GM12878 (cell line): ENCODE measurements at regions of chr5 and their contacts with region 1.

Region 1: DNA sequence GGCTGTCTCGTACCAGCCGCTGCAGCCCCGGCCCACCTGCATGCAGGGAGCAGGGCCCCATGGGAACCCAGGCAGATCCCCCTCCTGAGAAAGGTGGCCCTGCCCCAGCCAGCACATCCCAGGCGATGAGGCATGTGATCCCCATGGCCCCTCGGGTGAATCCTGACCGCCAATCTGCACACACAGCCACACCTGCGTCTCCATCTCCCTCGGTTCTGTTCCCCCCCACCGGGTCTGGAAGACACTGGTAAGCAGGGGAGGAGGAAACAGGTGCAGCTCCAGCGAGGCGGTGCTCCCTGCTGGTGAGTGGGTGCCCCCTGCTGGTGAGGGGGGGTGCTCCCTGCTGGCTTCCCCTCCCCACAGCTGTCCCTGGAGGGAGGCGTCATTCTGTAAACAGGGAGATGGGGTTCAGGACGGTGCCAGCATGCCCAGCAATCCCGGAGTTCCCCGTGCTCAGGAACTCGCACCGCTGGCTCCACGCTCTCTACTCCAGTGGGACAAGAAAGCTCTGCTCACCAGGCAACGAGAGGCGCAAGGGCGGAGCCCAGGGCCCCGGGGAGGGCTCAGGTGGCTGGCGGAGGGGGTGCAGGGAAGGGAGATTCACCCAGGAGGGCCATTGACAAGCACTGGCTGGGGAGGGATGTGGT is 28.4 kb upstream of the SLC12A7 start:
- DNase-seq: no peak
- ATAC-seq: peak; percentile 93
- H3K4me3 ChIP-seq: no peak overlapping the region
- H3K27ac ChIP-seq: no peak overlapping the region
- H3K4me1 ChIP-seq: peaks cover 11% of the 10 kb centered on the region
- H3K27me3 ChIP-seq: no peaks in the 10 kb centered on the region
- CTCF ChIP-seq: peak; percentile 79 to 92 (median 90)
- EP300 ChIP-seq: no peak
- POLR2A ChIP-seq: no peak
- RAD21 ChIP-seq: peak; percentile 78

Region 2: GRCh38 chr5:989961-990530 is 150.2 kb before region 1 on chr5:
- CTCF ChIA-PET with region 1: interaction called, 16 read pairs
- POLR2A ChIA-PET with region 1: no interaction called
- RAD21 ChIA-PET with region 1: no interaction called
- SMC1A ChIA-PET with region 1: no interaction called
- in situ Hi-C with region 1: no loop called
- intact Hi-C with region 1: no loop called
- DNase-seq: no peak
- ATAC-seq: peak; percentile 42
- H3K4me3 ChIP-seq: no peak overlapping the region
- H3K27ac ChIP-seq: no peak overlapping the region
- H3K4me1 ChIP-seq: no peaks in the 10 kb centered on the region
- H3K27me3 ChIP-seq: peaks cover 4% of the 10 kb centered on the region in 2 experiments; a peak in 3 of 4 replicates
- CTCF ChIP-seq: peak in 2 of 3 experiments; percentile 33 to 50; a peak in 3 of 6 replicates
- EP300 ChIP-seq: no peak
- POLR2A ChIP-seq: no peak
- RAD21 ChIP-seq: 0 out of 2 replicates have a peak, but pooled peaks have one; percentile 10

Region 3: DNA sequence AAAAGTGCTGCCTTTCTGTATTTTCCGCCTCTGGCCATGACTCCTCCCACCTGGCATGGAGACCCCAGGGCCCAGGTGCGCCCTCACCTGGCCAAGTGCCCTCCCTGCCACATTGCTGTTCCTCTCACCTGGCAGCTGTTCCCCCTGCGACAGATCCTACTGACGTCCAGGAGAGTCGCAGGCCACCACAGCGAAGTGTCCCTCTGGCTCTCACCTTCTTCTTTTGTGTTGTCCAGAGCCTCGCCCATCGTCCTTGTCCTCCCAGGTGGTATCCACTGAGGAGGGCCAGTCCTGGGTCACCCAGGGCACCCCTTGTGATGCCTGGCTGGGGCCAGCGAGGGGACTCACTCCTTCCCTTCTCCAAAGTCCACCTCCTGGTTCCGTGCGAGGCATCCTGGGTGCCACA is 129.1 kb before region 1 on chr5:
- CTCF ChIA-PET with region 1: interaction called, 6 read pairs
- POLR2A ChIA-PET with region 1: no interaction called
- RAD21 ChIA-PET with region 1: interaction called, 3 read pairs
- SMC1A ChIA-PET with region 1: no interaction called
- in situ Hi-C with region 1: no loop called
- intact Hi-C with region 1: loop called (anchors 10 kb)
- DNase-seq: no peak
- ATAC-seq: peak; percentile 70
- H3K4me3 ChIP-seq: no peak overlapping the region
- H3K27ac ChIP-seq: no peak overlapping the region
- H3K4me1 ChIP-seq: no peaks in the 10 kb centered on the region
- H3K27me3 ChIP-seq: peaks cover 2 to 3% of the 10 kb centered on the region in 2 experiments; a peak in 3 of 4 replicates
- CTCF ChIP-seq: peak; percentile 49 to 55 (median 53)
- EP300 ChIP-seq: no peak
- POLR2A ChIP-seq: no peak
- RAD21 ChIP-seq: peak; percentile 29

Region 4: DNA sequence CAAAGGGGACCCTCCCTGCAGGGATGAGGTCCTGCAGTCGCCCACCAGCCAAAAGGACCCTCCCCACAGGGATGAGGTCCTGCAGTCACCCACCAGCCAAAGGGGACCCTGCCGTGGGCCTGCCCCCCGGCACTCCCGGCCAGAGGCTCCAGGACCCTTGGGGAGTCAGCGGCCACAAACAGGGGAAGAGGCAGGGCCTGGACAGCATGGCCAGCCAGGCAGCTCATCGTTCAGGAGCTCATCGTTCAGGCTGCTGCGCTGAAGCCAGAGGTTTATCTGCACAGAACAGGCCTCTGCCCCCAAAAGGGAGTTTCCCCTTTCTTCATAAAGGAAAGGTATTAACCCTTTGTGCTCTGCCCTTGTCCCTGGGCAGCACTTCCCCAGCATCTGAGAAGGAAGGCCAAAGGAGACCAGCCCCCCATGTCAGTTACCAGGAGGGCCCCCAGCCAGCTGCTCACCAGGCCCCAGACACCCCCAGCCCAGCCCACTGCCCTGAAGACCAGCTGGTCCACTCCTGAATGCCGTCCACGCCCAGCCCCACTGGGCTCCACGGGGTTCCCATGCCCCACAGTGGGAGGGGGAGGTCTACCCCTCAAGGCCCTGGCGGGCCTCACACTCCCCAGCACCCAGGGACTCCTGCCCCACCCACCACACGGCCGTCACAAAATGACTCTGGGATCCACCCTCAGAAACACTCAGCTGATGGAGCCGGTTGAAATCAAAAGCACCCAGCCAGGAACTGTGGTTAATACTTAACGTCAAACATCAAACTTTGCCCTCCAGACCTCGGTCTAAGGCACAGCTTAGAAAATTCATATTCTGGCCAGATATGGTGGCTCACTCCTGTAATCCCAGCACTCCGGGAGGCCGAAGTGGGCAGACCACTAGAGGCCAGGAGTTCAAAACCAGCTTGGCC is 34.7 kb before region 1 on chr5:
- CTCF ChIA-PET with region 1: interaction called, 13 read pairs
- POLR2A ChIA-PET with region 1: interaction called, 32 read pairs
- RAD21 ChIA-PET with region 1: interaction called, 78 read pairs
- SMC1A ChIA-PET with region 1: interaction called, 9 read pairs
- in situ Hi-C with region 1: no loop called
- intact Hi-C with region 1: no loop called
- DNase-seq: no peak
- ATAC-seq: peak; percentile 76
- H3K4me3 ChIP-seq: no peak overlapping the region
- H3K27ac ChIP-seq: no peak overlapping the region
- H3K4me1 ChIP-seq: no peaks in the 10 kb centered on the region
- H3K27me3 ChIP-seq: no peaks in the 10 kb centered on the region; a peak in 1 of 4 replicates
- CTCF ChIP-seq: no peak
- EP300 ChIP-seq: no peak
- POLR2A ChIP-seq: no peak
- RAD21 ChIP-seq: no peak

Region 5: DNA sequence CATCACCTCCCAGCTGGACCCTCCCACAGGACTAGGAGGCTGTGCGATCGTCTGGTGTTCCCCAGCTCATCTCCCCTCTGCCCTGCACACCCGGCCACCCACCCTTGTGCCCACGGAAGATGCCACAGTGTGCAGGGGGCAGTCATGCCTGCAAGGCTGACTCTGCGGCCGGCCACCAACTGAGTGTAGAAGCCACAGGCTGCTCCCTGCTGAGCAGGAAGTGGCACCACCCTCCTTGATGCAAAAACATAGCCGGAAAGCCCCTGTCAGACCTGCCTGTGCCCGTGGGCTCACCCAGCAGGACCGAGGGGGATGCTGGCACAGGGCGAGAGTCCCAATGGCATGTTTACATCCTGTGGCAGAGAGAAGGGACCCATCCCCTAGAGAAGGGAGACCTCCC is 11.9 kb after region 1 on chr5:
- CTCF ChIA-PET with region 1: interaction called, 11 read pairs
- POLR2A ChIA-PET with region 1: interaction called, 3 read pairs
- RAD21 ChIA-PET with region 1: interaction called, 7 read pairs
- SMC1A ChIA-PET with region 1: interaction called, 5 read pairs
- in situ Hi-C with region 1: no loop called
- intact Hi-C with region 1: no loop called
- DNase-seq: no peak
- ATAC-seq: peak; percentile 92
- H3K4me3 ChIP-seq: no peak overlapping the region
- H3K27ac ChIP-seq: no peak overlapping the region
- H3K4me1 ChIP-seq: no peaks in the 10 kb centered on the region
- H3K27me3 ChIP-seq: peaks cover 0 to 2% of the 10 kb centered on the region in 2 experiments; a peak in 3 of 4 replicates
- CTCF ChIP-seq: no peak
- EP300 ChIP-seq: no peak
- POLR2A ChIP-seq: no peak
- RAD21 ChIP-seq: no peak

Region 6: DNA sequence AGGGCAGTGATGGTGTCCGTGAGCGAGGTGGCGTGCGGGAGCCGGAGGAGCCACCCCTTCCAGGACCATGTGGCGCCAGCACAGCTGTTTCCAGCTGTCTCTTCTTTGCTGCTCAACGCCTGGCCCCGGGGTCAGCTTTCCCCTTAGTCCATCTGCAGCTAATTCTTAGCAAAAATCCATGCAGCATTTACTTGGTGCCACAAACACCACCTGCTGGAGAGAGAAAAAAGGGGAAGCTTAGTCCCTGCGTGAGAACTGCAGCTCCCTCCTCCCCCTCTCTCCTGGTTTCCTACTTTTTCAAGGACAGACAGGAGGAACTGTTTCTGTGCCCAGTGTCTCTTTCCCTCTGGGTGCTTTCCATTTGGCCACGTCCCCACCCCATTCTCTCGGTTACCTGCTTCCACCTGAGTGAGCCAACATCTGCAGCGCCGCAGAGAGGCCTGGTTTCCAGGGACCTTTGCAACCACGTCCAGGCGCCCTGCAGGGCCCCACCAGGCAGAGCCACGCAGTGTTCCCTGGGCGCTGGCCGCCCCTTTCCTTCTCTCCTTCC is 64.5 kb after region 1 on chr5:
- CTCF ChIA-PET with region 1: no interaction called
- POLR2A ChIA-PET with region 1: no interaction called
- RAD21 ChIA-PET with region 1: no interaction called
- SMC1A ChIA-PET with region 1: no interaction called
- in situ Hi-C with region 1: no loop called
- intact Hi-C with region 1: no loop called
- DNase-seq: no peak
- ATAC-seq: no peak
- H3K4me3 ChIP-seq: no peak overlapping the region
- H3K27ac ChIP-seq: no peak overlapping the region
- H3K4me1 ChIP-seq: no peaks in the 10 kb centered on the region
- H3K27me3 ChIP-seq: no peaks in the 10 kb centered on the region
- CTCF ChIP-seq: no peak
- EP300 ChIP-seq: no peak
- POLR2A ChIP-seq: no peak
- RAD21 ChIP-seq: no peak

Region 7: DNA sequence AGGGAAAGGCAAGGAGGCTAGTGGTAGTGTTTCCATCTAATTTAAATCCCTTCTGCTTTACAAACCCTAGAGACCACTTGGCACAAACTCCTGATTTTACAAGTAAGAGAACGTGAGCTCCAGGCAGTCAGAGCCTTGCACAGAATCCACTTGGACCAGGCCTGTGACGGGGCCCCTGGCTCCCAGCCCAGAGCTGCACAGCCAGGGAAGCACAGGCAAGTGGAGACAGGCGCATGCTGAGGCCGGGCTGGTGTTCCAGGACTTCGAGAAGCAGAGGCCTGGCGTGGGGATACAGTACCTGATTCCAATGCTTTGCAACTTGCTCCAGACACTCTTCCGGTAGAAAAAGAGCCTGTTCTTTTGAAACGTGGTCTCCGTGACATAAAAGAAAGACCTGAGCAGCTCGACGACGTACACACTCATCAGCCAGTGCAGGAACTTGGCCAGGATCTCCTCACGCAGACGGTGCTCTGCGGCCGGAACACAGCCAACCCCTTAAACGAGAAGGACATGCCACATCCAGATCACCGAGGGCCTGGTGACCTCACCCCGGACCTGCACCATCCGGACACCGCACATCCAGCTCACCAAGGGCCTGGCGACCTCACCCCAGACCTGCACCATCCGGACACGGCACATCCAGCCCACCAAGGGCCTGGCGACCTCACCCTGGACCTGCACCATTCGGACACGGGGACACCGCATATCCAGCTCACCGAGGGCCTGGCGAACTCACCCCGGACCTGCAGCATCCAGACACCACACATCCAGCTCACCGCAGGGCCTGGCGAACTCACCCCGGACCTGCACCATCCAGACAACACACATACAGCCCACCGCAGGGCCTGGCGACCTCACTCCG is 142.1 kb after region 1 on chr5:
- CTCF ChIA-PET with region 1: no interaction called
- POLR2A ChIA-PET with region 1: no interaction called
- RAD21 ChIA-PET with region 1: no interaction called
- SMC1A ChIA-PET with region 1: no interaction called
- in situ Hi-C with region 1: no loop called
- intact Hi-C with region 1: no loop called
- DNase-seq: no peak
- ATAC-seq: no peak
- H3K4me3 ChIP-seq: no peak overlapping the region
- H3K27ac ChIP-seq: no peak overlapping the region
- H3K4me1 ChIP-seq: no peaks in the 10 kb centered on the region
- H3K27me3 ChIP-seq: no peaks in the 10 kb centered on the region
- CTCF ChIP-seq: no peak
- EP300 ChIP-seq: no peak
- POLR2A ChIP-seq: no peak
- RAD21 ChIP-seq: no peak

Region 8: DNA sequence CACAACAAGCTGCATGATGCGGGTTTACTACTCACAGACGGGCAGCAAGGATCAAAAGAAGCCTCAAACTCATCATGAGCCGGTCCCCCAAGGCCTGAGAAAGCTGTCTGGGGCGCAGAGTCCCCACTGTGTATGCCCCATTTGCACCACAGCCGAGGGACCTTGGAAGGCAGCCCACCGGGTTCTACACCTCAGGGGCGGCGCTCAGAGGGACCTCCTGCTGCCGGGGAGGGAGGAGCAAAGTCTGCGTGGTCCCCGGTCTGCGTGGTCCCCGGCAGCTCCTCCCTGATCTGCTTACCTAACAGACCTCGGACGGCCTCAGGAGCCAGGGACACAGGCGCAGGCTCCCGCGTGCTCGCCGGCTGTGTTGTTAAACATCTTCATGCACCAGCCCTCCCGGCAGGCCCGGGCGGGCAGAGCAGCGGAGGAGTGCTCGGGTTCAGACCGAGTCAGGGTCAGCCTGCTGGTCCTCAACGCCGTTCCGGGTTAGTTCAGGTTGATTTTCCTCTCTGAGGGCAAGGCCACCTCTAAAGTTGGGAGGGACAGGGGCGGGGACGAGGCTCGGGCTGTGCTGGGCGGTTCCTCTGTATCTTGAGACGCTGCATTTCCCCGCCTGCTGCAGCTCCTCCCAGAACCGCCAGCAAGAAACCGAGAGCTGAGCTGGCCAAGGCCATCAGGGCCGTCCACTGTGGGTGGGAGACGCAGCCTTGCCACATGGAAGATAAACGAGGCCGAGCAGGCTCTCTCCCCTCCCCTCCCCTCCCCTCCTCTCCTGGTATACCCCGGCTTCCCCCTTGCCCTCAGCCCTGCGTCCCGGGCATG is 584.7 kb after region 1 on chr5:
- CTCF ChIA-PET with region 1: no interaction called
- POLR2A ChIA-PET with region 1: no interaction called
- RAD21 ChIA-PET with region 1: no interaction called
- SMC1A ChIA-PET with region 1: no interaction called
- in situ Hi-C with region 1: no loop called
- intact Hi-C with region 1: no loop called
- DNase-seq: no peak
- ATAC-seq: no peak
- H3K4me3 ChIP-seq: no peak overlapping the region
- H3K27ac ChIP-seq: no peak overlapping the region
- H3K4me1 ChIP-seq: no peaks in the 10 kb centered on the region
- H3K27me3 ChIP-seq: peaks cover 4 to 6% of the 10 kb centered on the region in 2 experiments
- CTCF ChIP-seq: no peak
- EP300 ChIP-seq: no peak
- POLR2A ChIP-seq: no peak
- RAD21 ChIP-seq: no peak